Right ventricle myocardium superior (tissue), 1 donor: ENCODE measurements at regions of chr21 and their contacts with region 1.

Region 1: DNA sequence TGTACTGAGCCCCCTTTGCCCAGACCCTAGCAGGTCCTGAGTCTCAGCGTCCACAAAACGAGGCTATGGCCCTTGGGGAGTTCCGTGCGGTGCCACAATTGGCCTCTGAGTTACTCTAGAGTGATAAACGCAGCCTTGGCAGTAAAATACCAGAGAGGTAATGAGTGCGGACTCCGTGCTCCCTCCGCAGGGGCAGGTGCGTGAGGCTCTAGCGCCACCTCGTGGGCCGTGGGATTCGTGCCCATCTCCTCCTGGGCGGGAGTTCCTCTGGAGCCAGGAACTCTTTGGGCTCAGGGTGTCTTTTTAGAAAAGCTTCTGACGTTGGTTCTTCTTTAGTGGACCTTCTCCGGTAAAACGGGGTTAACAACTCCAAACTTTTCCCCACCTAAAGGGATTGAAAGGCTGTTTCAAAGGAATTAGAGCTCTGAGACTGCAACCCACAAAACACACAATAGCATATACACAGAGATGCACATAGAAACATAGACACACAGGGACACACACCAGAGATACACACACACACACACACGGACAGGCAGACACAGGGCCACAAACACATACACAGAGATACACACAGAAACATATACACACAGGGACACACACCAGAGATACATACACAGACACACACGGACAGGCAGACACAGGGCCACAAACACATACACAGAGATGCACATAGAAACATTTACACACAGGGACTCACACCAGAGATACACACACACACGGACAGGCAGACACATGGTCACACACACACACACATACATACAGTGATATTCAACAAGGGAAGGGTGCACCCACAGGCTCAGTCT is 99.4 kb downstream of the KCNJ15 start:
- DNase-seq: peak; percentile 89
- ATAC-seq: peak; percentile 93

Region 2: DNA sequence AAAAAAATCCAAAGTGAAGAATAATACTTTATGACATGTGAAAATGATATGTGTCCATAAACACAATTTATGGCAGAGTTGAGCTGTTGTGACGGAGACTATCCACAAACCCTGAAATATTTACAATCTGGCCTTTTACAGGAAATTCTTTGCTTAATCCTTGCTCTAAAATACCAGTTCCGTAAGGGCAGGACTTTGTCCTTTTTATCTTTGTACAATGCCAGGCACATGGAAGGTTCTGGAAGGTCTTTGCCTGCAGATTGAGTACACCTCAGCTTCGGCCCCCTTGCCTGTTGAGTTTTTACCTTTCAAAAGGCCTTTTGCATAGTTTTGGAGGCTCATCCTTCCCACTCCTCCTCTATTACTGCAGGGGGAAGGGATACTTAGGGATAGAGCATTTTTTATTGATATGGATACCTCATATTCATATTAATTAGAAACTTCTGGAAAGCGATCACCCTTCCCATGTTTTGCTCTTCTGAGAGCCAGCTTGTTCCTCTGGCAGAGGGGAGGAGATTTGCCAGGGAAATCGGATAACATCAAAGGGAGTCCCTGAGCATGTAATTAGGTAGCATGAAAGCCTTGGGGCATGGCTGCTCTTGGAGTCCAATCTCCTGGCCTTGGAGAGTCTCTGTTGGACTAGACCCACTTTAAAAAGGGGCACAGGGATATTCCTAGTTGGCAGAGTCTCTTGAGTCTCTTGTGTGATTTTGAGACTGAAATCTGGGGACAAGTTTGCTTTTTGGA is 657.0 kb before region 1 on chr21:
- intact Hi-C with region 1: loop called (anchors 10 kb)
- DNase-seq: no peak
- ATAC-seq: no peak

Region 3: GRCh38 chr21:37849506-37850102 is 506.6 kb before region 1 on chr21:
- intact Hi-C with region 1: no loop called
- DNase-seq: no peak
- ATAC-seq: no peak

Region 4: DNA sequence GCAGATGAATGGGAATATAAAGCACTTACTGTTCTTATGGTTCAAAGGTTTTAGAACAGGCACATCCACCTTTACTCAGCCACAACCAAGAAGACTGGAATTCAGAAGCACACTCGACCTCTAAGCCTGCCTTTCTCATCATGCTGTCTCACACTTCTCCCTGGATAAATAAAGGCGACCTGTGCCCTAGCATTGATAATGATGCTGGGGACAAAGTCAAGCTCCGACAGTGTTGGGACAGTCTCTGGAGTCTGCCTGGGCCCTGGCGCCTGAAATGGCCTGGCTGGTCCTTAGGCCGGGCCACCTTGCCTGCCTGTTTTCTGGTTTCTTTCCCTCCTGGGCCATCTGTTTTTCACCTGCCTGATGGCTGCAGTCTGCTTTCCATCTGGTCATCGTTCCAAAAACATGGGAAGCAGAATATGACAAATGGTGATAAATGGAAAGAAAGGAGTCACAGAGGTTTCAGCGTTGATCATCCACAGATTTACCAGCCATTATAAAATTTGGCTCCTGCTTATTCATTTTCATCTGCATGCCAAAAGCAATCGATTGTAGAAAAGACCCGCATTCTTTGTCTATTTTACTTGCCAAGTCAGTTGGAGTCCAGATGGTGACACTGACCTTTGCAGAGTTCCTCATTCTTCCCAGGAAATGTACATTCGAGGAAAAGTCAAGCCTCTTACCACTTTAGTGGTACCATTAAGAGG is 190.6 kb before region 1 on chr21:
- intact Hi-C with region 1: loop called (anchors 2 kb)
- DNase-seq: no peak
- ATAC-seq: no peak

Region 5: GRCh38 chr21:38219049-38219628 is 137.1 kb before region 1 on chr21:
- intact Hi-C with region 1: loop called (anchors 2 kb)
- DNase-seq: peak; percentile 77
- ATAC-seq: peak; percentile 90